Esophagus muscularis mucosa (tissue), 4 donors: ENCODE measurements at regions of chr2 and their contacts with region 1.

Region 1: DNA sequence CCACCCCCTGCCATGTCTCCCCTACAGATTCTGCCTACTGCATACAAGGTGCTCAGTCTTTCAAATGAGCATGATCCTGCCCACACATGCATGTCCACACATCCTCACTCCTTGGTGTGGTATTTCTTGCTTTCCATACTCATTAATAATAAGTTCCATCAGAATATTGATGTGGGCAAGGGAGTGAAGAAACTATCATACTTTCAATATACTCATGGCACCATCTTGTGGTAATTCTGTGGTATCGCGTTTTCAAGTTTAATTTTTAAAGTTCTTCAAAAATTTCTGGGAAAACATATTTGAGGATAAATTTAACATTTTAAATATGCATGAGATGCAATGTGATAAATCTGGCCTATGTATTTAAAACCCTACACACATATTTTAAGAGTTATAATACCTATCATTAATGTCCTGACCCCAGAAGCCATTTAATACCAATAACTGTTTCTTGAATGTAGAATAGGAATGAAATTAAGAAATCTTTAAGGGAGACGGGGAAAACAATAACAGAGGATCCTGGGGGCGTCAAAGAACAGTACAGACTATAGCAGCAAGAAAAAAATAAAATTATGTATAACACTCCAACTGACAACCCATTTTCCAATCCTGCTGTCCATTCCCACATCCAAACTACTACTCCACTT is 110.1 kb downstream of the ZNF385B start:
- DNase-seq: no peak
- H3K4me3 ChIP-seq: no peak overlapping the region
- H3K27ac ChIP-seq: no peak overlapping the region
- H3K4me1 ChIP-seq: peaks cover 0 to 5% (median 3%) of the 10 kb centered on the region in 4 donors
- H3K27me3 ChIP-seq: no peaks in the 10 kb centered on the region
- CTCF ChIP-seq: peak; percentile 67 to 73 (median 69)
- EP300 ChIP-seq: no peak
- POLR2A ChIP-seq: no peak

Region 2: DNA sequence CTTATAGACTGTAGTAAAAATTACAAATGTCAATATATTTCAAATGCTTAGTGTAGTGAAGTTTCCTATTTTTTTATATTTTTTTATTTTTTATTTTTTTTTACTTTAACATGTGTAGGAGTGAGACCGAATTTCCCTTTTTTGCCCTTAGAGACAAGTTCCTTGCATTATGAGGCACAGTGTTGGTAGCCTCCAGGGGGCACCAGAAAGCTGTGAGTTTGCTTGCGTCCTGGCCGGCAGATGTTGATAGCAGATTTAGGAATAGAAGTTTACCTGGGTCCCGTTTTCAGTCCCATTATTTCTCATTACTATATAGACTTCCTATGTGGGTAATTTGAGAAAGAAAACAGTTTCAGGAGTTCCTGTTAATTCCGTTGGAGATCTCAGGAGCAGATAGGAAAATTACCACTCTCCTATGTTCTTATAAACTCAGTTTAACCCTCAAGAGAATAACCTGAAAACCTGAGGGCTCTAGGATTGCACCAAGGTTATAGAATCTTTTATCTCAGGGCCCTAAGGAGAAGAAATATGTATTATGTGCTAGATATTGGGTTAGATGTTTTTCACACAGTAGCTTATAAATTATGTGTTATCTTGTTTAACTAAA is 329.1 kb before region 1 on chr2:
- intact Hi-C with region 1: loop called (anchors 2 kb)
- DNase-seq: peak; percentile 93
- H3K4me3 ChIP-seq: no peak overlapping the region
- H3K27ac ChIP-seq: no peak overlapping the region
- H3K4me1 ChIP-seq: peaks cover 0 to 9% (median 3%) of the 10 kb centered on the region in 4 donors
- H3K27me3 ChIP-seq: no peaks in the 10 kb centered on the region
- CTCF ChIP-seq: peak; percentile 75 to 77 (median 75)
- EP300 ChIP-seq: no peak
- POLR2A ChIP-seq: no peak